Dendritic cell treated with granulocyte-macrophage colony-stimulating factor and Interleukin-4, amounts not matched to agents 40 ng/mL and 50 ng/mL, for 4 days (primary cell): ENCODE measurements at regions of chr6 and their contacts with region 1.

Region 1: DNA sequence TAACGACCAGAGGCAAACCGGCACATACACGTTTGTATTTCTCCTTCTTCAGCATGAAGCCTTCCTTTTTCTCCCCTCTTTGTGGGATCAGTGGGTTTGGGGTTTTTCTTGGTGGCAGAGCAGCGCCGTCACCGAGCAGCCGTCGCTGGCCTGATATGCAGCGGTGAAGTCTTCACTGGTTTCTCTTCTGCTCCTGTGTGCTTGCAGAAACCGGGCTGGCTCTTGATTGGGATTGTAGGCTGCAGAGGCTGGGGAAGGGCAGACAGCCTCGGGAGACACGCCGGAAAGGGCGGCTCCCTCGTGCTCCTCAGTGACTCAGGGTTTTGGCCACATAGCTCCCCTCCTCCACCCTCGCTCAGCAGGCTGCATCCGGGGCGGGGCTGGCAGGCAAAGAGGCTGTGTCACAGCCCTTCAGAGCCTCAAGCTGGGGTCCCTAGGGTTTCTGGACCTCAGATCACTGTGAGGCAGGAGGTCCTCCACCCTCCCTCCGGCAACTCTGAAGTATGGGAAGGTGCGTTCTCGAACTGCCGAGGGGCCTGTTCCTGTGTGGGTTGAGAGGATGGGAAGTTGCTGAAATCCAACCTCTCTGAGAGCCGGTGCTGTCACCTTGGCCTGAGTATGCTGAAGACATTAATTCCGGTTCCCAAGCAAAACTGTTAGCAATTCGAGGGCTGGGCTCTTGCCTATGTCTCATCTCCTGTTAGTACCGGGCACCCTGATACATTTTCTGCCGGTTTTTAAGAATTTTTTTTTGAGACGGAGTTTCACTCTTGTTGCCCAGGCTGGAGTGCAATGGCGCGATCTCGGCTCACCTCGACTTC is 24.2 kb downstream of the NQO2 start:
- H3K4me3 Mint-ChIP-seq: peak overlapping the region; percentile 100
- H3K27ac Mint-ChIP-seq: peak overlapping the region; percentile 94
- H3K4me1 Mint-ChIP-seq: peaks cover 67% of the 10 kb centered on the region
- H3K27me3 Mint-ChIP-seq: no peaks in the 10 kb centered on the region

Region 2: GRCh38 chr6:2999618-3000557 is 24.0 kb before region 1 on chr6 and contains the start of gene NQO2:
- intact Hi-C with region 1: loop called (anchors 1 kb)
- H3K4me3 Mint-ChIP-seq: peak within 1 kb of the TSS; percentile 90
- H3K27ac Mint-ChIP-seq: peak within 1 kb of the TSS; percentile 92
- H3K4me1 Mint-ChIP-seq: peaks cover 39% of the 10 kb centered on the region
- H3K27me3 Mint-ChIP-seq: peaks cover 1% of the 10 kb centered on the region

Region 3: DNA sequence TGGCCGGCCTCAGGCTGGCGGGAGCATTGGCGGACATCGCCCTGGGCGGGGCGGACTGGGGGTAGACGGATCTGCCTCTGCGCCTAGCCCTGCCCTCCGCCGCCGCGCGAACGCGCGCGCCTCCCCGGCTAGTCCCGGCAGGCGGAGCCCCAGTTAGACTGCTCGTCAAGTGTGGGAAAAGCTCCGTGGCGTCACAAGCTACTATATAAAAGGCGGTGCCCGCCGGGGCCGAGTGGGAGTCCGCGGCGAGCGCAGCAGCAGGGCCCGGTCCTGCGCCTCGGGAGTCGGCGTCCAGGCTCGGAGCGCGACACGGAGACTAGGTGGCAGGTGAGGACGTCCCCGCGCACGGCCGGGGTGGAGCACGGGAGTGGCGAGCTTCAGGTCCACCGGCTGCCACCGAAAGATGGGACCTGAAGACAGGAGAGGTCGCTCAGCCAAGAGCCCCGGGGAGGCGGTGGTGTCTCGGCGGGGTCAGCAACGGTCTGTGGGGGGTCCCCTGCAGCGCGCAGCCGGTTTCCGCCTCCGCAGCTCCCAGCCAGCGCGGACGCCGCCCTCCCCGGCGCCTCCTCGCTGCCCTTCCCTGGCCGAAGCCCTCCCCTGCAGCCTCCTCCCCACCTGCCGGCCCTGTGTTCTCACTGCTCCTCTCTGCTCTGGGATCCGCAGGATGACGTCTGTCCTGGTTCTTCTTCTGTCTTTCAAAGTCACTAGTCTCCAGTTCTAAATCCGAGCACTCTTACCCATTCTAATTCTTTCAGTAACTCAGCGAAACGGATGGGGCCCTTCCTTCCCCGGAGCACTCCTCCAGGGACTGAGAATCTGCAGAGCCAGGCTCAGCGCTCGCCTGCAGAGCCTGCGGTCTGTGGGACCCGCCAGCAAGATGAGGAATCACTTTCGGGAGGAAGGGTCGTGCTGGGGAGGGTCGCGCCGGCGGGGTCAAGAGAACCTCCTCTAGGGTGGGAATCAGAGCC is 40.1 kb after region 1 on chr6:
- intact Hi-C with region 1: no loop called
- H3K4me3 Mint-ChIP-seq: peak overlapping the region; percentile 87
- H3K27ac Mint-ChIP-seq: peak overlapping the region; percentile 85
- H3K4me1 Mint-ChIP-seq: peaks cover 26% of the 10 kb centered on the region
- H3K27me3 Mint-ChIP-seq: peaks cover 2% of the 10 kb centered on the region

Region 4: GRCh38 chr6:3382326-3383279 is 358.7 kb after region 1 on chr6:
- intact Hi-C with region 1: no loop called
- H3K4me3 Mint-ChIP-seq: no peak overlapping the region
- H3K27ac Mint-ChIP-seq: no peak overlapping the region
- H3K4me1 Mint-ChIP-seq: peaks cover 45% of the 10 kb centered on the region
- H3K27me3 Mint-ChIP-seq: peaks cover 57% of the 10 kb centered on the region

Region 5: GRCh38 chr6:3575687-3576086 is 551.8 kb after region 1 on chr6:
- intact Hi-C with region 1: no loop called
- H3K4me3 Mint-ChIP-seq: no peak overlapping the region
- H3K27ac Mint-ChIP-seq: no peak overlapping the region
- H3K4me1 Mint-ChIP-seq: no peaks in the 10 kb centered on the region
- H3K27me3 Mint-ChIP-seq: peaks cover 2% of the 10 kb centered on the region